ENCODE measurements at regions of chr3 and their contacts with region 1.

Region 1: DNA sequence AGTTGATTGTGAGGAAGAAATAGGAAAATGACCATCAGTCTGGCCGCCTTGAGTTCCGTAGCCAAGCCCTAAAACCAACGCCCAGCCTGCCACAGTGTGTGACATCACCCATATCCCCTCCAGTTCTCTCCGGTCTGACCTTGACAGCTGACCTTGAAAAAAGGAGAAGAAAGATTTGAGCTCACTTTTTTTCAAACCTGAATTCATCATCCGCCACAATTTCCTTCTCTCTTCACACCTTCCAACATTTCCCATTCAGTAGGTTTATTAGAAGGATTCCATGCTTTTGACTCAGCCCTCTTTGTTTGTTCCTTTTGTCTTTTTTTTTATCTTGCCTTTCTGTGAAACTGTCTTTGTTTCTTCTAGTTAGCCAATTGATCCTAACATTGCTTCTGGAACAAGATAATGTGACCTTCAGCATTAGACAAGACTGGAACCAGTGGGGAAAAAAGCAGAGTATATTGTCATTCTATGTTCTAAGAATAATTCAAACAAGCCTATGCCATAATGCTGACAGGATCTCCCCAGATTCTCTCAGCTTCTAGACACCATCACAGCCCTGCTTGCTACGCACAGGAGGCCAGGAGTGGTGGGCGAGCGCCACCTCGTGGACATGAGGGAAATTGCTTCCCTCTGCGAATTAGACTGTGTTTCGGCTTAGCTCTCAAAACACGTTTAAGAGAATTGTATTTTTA is 283.1 kb downstream of the FGF12 start:
- DNase-seq: peak; percentile 68
- H3K4me3 Mint-ChIP-seq: no peak overlapping the region
- H3K27ac Mint-ChIP-seq: no peak overlapping the region
- H3K4me1 Mint-ChIP-seq: no peaks in the 10 kb centered on the region
- H3K27me3 Mint-ChIP-seq: peaks cover 83% of the 10 kb centered on the region
- CTCF ChIP-seq: peak; percentile 97

Region 2: DNA sequence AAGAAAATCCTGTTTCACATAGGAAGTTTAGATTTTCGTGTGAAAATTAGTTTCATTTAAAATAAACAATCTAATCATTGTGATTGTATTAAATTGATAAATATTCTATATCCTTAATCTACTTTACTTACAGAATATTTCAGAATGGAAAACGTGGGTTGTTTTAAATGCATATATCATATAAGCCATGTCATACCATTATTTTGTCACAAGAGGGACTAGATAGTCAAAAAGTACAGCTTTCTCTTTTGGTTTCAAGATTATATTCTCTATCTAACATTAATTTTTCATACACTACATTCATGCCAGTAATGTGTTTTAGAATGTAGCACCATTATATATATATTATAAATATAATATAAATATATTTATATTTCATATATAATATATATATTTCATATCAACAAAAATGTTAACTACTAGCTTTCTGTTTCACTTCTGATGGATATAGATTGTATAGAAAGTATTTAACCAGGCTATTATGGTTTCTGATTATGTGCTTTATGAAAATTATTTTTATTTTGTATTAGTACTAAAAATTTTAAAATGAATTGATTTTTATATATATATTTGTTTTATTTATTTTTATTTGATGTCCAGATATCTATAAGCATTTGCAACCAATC is 1199.9 kb before region 1 on chr3:
- CTCF ChIA-PET with region 1: interaction called, 5 read pairs
- POLR2A ChIA-PET with region 1: no interaction called
- intact Hi-C with region 1: loop called (anchors 10 kb)
- DNase-seq: peak; percentile 30
- H3K4me3 Mint-ChIP-seq: no peak overlapping the region
- H3K27ac Mint-ChIP-seq: no peak overlapping the region
- H3K4me1 Mint-ChIP-seq: peaks cover 6% of the 10 kb centered on the region
- H3K27me3 Mint-ChIP-seq: no peaks in the 10 kb centered on the region
- CTCF ChIP-seq: no peak

Region 3: DNA sequence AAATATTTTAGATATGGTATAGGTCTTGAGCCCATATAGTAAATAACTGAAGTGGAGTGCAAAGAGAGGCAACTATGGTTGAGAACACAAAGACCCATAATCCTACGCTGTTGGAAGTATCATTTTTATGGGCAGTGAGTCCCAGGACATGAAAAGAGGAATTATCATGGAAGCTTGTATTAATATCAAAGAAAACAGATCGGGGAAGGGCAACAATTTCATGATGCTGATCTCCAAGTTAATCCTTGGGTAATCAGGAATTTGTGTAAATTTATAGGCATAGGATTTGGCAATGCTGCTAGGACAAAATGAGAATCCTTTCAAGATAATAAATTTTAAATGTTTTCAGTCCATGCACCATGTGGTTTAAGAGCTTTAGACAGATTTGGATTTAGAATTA is 1023.5 kb before region 1 on chr3:
- CTCF ChIA-PET with region 1: interaction called, 18 read pairs
- POLR2A ChIA-PET with region 1: no interaction called
- intact Hi-C with region 1: loop called (anchors 1 kb)
- DNase-seq: no peak
- H3K4me3 Mint-ChIP-seq: no peak overlapping the region
- H3K27ac Mint-ChIP-seq: no peak overlapping the region
- H3K4me1 Mint-ChIP-seq: peaks cover 5% of the 10 kb centered on the region
- H3K27me3 Mint-ChIP-seq: no peaks in the 10 kb centered on the region
- CTCF ChIP-seq: no peak

Region 4: GRCh38 chr3:191499307-191500080 is 944.7 kb before region 1 on chr3:
- CTCF ChIA-PET with region 1: interaction called, 5 read pairs
- POLR2A ChIA-PET with region 1: no interaction called
- intact Hi-C with region 1: loop called (anchors 5 kb)
- DNase-seq: peak; percentile 77
- H3K4me3 Mint-ChIP-seq: peak overlapping the region; percentile 62
- H3K27ac Mint-ChIP-seq: peak overlapping the region; percentile 73
- H3K4me1 Mint-ChIP-seq: peaks cover 11% of the 10 kb centered on the region
- H3K27me3 Mint-ChIP-seq: no peaks in the 10 kb centered on the region
- CTCF ChIP-seq: no peak

Region 5: DNA sequence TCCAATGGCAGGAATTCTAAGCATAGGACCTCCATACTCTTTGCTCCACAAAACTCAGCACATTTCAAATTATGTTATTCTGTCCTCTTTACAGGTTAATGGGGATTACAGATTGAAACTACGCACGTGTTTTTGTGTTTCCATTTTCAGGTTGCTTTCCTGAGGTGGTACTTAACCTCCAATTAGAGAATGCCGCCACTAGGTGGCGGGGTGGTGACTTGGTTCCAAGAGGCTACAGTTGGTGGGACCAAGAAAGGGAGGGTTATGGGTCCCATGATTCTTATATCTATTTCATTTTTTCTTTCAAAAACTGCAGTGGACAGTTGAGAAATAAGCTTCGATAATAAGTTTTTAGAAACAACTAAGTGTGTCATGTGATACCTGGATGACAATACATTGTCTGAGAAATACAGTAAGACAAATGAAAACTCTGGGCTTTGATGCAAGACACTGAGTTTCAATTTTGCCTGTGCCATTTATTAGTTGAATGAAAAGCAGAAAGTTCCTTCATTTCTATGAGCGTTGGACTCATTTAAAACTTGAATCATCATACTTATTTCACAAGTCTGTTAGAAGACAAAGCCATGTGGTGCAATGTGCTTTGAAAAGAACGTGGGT is 255.9 kb before region 1 on chr3:
- CTCF ChIA-PET with region 1: interaction called, 54 read pairs
- POLR2A ChIA-PET with region 1: interaction called, 3 read pairs
- intact Hi-C with region 1: loop called (anchors 1 kb)
- DNase-seq: peak; percentile 71
- H3K4me3 Mint-ChIP-seq: no peak overlapping the region
- H3K27ac Mint-ChIP-seq: no peak overlapping the region
- H3K4me1 Mint-ChIP-seq: peaks cover 6% of the 10 kb centered on the region
- H3K27me3 Mint-ChIP-seq: no peaks in the 10 kb centered on the region
- CTCF ChIP-seq: peak; percentile 68

Region 6: DNA sequence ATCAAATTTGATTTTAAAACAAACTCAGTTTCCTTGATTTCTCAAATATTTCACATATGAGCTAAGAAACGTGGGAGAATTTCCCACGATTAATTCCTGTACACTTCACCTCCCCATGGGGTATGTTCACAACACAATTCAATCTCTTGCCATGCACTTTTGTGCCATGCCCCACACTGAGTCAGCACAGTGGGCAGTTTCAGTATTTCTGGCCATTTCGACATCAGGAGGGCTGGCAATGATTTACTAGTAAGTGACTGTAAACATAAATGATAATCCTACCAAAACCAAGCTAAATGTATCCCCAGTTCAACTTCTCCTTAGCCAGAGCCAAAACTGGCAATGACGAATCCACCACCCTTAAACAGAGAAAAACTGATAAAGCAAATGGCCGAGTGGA is 10.5 kb before region 1 on chr3:
- CTCF ChIA-PET with region 1: interaction called, 57 read pairs
- POLR2A ChIA-PET with region 1: no interaction called
- intact Hi-C with region 1: no loop called
- DNase-seq: peak; percentile 38
- H3K4me3 Mint-ChIP-seq: no peak overlapping the region
- H3K27ac Mint-ChIP-seq: no peak overlapping the region
- H3K4me1 Mint-ChIP-seq: no peaks in the 10 kb centered on the region
- H3K27me3 Mint-ChIP-seq: peaks cover 25% of the 10 kb centered on the region
- CTCF ChIP-seq: no peak